Calu3 (cell line): ENCODE measurements at regions of chr3 and their contacts with region 1.

Region 1: DNA sequence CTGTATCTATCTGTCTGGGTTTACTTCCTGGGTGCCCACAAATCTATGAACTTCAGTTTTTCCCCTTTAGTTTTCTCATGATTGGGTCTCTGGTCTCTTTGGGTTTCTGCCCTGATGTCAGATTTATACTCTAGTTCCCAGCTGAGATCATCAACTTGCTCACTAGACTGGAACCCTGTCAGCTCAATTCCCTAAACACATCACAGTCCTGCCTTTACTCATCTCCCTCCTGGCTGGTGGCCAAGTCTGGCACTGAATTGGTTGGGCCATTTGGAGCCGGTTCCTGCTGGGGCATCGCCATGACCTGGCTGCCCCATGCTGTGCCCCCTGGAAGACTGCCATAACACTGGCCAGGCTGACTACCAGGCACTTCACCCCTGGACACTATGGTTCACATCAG is 345.3 kb downstream of the CHST2 start:
- DNase-seq: peak; percentile 56
- H3K4me3 Mint-ChIP-seq: no peak overlapping the region
- H3K27ac Mint-ChIP-seq: peak overlapping the region; percentile 68
- H3K4me1 Mint-ChIP-seq: peaks cover 45% of the 10 kb centered on the region
- H3K27me3 Mint-ChIP-seq: no peaks in the 10 kb centered on the region
- CTCF ChIP-seq: no peak

Region 2: DNA sequence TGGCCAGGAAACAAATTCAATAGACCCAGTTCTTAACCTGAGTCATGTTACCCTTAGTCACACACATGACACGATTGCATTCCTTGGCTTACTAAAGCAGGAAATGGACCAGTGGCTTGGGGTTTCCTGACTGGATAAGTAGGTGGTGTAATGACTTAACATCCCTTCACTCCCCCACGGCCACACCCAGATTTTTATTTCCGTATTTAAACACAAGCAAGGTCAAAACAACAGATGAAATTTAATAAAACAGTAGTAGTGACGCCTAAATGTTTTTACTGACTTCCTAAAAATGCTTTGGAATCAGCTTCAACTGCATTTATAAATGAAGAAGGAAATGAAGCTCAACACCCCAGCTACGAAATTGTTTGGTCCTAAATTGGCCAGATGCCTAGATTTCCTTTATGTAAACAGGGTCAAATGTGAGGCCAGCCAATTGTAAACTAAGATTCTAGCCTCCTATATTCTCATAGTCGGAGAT is 21.0 kb before region 1 on chr3:
- CTCF ChIA-PET with region 1: interaction called, 3 read pairs
- intact Hi-C with region 1: loop called (anchors 2 kb)
- DNase-seq: peak; percentile 87
- H3K4me3 Mint-ChIP-seq: peak overlapping the region; percentile 39
- H3K27ac Mint-ChIP-seq: peak overlapping the region; percentile 95
- H3K4me1 Mint-ChIP-seq: peaks cover 37% of the 10 kb centered on the region
- H3K27me3 Mint-ChIP-seq: no peaks in the 10 kb centered on the region
- CTCF ChIP-seq: no peak

Region 3: DNA sequence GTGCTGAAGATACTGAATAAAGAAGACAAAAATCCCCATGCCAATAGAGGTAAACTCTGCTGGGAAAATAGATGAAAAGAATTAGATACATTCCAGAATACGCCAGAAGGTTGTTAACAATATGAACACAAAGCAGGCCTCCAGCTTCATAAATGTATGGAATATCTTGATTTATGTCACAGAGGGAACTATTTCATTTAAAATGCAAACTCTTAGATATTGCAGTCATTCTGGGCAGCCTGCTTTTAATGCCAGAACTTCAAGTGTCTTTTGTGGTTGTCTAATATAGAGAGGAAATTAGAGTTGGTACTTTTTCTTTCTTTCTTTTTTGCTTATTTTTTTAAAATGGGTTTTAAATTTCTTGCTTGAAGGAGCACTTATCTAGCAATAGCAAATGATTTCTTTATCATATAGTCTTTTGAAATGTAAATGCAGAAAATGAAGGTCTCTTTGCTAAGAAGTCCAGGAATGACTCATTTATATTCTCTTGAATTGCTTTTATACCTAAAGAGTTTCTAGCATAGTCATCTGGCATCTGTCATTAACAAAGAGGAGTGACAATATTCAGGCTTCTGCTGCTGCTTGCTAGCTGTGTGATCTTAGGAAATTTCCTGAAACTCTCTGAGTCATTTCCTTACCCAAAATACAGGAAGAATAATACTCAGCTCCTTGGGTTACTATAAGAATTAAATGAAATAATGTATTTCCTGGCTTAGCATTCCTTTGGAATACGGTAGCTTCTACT is 1034.3 kb after region 1 on chr3:
- CTCF ChIA-PET with region 1: no interaction called
- intact Hi-C with region 1: no loop called
- DNase-seq: no peak
- H3K4me3 Mint-ChIP-seq: no peak overlapping the region
- H3K27ac Mint-ChIP-seq: no peak overlapping the region
- H3K4me1 Mint-ChIP-seq: no peaks in the 10 kb centered on the region
- H3K27me3 Mint-ChIP-seq: no peaks in the 10 kb centered on the region
- CTCF ChIP-seq: no peak